HepG2 (cell line): ENCODE measurements at regions of chr15 and their contacts with region 1.

Region 1: DNA sequence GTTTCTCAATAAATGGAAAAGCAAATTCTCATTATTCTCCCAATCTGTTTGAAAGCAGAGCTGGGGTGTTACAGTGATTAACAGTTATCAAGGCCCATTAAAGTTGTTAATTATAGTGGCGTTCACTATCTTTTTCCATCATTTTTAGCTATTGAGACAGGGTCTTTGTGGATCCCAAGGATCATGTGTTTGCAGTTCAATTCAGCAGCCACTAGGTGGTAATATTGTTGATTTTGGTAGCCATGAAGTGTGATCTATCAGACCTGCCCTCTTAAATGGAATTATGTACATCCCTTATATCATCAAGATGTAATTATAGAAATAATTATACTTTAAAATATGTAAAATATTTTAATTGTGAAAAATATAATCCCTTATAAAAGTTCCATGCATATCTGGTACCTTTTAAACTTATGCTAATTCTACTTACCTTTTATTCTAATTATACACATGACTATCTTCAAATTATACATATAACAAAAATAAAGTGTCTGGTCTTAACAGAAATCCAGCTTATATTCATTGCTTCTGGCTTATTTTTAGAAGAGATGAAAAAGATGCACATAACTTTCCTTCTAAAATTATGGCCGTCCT is 126.4 kb downstream of the GREM1 start:
- DNase-seq: peak; percentile 30
- ATAC-seq: no peak
- H3K4me3 ChIP-seq: no peak overlapping the region
- H3K27ac ChIP-seq: no peak overlapping the region
- H3K4me1 ChIP-seq: peaks cover 3% of the 10 kb centered on the region
- H3K27me3 ChIP-seq: no peaks in the 10 kb centered on the region; a peak in 1 of 5 replicates
- CTCF ChIP-seq: peak; percentile 61
- EP300 ChIP-seq: no peak
- POLR2A ChIP-seq: no peak
- RAD21 ChIP-seq: no peak

Region 2: DNA sequence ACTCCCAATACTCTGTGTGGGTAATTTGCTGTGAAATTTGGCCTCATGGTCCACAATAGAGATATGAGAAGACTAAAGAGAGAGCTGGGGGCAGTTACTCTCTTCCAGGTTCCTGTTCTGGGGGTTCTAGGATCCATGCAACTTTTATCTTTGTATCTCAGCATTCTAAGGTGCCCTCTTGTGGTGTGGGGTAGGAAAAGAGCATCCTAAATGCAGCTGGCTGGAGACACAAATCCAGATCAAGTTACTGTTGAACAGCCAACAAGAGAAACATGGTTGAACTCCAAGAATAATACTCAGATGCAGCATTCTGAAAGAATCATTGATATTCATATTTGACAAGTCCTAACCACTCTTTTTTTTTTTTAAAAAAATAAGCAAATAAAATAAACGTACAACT is 111.8 kb after region 1 on chr15:
- CTCF ChIA-PET with region 1: interaction called, 4 read pairs
- POLR2A ChIA-PET with region 1: no interaction called
- in situ Hi-C with region 1: loop called (anchors 10 kb)
- intact Hi-C with region 1: loop called (anchors 1 kb)
- DNase-seq: peak; percentile 25
- ATAC-seq: peak; percentile 47; the same call in 1 of the 3 replicates
- H3K4me3 ChIP-seq: no peak overlapping the region
- H3K27ac ChIP-seq: no peak overlapping the region
- H3K4me1 ChIP-seq: no peaks in the 10 kb centered on the region
- H3K27me3 ChIP-seq: no peaks in the 10 kb centered on the region
- CTCF ChIP-seq: peak; percentile 54
- EP300 ChIP-seq: no peak
- POLR2A ChIP-seq: no peak
- RAD21 ChIP-seq: no peak